Panc1 (cell line): ENCODE measurements at regions of chr7 and their contacts with region 1.

Region 1: DNA sequence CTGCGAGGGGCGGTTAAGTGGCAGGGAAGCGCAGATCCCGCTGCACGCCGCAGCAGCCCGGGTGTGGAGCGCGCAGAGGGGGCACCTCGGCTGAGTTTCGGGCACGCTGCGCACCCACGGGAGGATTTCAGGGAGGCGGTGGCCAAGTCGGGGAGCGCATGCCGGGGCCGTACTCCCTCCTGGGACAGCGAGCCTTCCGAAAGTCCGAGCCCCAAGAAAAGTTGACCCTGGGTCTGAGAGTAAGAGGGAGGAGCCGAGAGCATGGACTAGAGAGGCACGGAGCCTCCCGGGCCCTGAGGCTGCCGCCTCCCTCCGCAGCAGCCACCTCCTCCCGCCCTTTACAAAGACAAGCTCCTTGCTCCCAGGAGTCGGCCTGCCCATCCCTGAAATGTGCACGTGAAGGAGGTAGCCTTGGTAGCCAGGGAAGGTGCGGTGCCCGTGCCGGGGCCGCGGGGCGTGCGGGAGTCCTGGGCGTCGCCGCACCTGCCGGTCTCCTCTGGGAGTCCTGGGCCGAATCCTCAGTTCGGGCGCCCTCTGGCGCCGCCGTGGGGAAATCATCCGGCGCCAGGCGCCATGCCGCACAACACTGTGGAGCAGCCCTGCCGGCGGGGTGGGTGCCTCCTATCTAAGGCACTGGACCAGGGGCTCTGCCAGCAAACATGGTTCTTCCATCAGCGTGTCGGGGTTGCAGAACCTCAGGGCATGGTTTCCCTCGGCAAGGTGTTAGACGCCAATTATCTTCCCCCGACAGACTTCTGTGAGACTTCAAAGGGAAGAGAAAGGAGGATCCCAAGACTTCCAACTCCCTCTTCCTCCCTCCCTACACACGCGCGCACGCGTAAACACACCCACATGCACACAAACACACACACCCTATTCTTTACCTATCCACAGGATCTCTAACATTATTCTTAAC is 104.0 kb downstream of the TRIL start:
- DNase-seq: peak; percentile 56
- ATAC-seq: peak; percentile 98
- H3K4me3 ChIP-seq: peak overlapping the region; percentile 47 to 64
- H3K27ac ChIP-seq: no peak overlapping the region
- H3K4me1 ChIP-seq: no peaks in the 10 kb centered on the region; the same call in 1 of the 2 replicates
- H3K27me3 ChIP-seq: peaks cover 33% of the 10 kb centered on the region
- CTCF ChIP-seq: peak; percentile 98

Region 2: DNA sequence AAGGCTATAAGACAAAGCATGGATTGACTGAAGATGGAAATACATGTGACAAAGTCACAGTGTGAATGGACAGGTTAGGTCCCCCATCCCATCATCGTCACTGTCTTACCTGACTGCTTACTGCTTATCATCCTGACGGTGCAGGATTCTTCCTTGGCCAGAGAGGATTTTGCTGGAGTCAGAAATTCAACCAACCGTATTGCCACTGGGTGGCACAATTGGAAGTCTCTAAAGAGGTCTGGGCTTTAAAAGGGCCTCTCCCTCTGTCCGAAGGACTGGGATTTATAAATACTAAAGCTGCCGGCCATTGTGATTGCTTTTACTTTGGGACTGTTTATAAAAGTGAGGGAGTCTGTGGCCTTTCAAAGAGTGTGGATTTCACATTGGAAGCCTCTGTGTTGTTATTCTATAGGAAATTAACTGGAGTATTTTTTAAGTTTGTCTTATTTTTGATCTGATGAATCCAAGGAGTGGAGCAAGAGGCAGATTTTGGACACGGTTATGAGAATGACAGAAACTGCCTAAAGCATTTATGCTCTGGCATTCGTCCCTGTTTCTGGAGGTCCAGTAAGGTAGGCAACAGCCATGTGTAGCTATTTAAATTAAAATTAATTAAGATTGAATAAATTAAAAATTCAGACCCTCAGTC is 555.1 kb before region 1 on chr7:
- CTCF ChIA-PET with region 1: no interaction called
- POLR2A ChIA-PET with region 1: no interaction called
- in situ Hi-C with region 1: no loop called
- intact Hi-C with region 1: loop called (anchors 5 kb)
- DNase-seq: peak; percentile 28
- ATAC-seq: peak; percentile 94
- H3K4me3 ChIP-seq: no peak overlapping the region
- H3K27ac ChIP-seq: no peak overlapping the region
- H3K4me1 ChIP-seq: no peaks in the 10 kb centered on the region
- H3K27me3 ChIP-seq: peaks cover 2% of the 10 kb centered on the region; the same call in 1 of the 2 replicates
- CTCF ChIP-seq: peak; percentile 76

Region 3: DNA sequence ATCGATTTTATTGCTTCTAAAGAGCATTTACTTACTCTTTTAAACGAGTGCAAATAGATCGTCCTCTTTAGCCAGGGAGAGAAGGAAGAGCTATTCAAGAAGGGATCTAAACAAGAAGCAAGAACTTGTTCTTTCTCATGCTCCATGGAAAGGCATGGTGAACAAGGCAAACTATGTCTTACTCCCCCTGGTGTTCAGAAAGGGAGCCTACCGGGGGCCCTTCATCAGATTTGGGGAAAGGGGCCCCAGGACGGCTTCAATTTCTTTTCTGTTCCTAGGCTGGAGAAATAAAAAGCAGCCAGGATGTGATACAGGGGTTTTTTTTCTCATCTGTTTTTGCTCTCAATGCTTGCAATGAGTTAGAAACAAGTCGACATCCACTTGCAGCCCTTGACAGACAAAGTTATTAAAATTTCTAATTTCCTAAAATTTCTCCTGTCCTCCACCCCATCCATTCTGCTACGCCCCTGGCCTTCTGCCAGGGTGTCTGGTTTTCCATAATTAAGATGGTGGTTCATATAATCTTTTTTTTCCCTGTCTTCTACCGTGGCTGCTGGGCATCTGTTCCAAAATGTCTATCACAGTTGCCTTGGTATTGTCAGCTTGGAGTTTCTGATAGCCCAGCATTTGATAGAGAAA is 227.3 kb before region 1 on chr7:
- CTCF ChIA-PET with region 1: no interaction called
- POLR2A ChIA-PET with region 1: no interaction called
- in situ Hi-C with region 1: no loop called
- intact Hi-C with region 1: loop called (anchors 10 kb)
- DNase-seq: no peak
- ATAC-seq: peak; percentile 74; the same call in 1 of the 2 replicates
- H3K4me3 ChIP-seq: no peak overlapping the region
- H3K27ac ChIP-seq: no peak overlapping the region
- H3K4me1 ChIP-seq: no peaks in the 10 kb centered on the region
- H3K27me3 ChIP-seq: peaks cover 2% of the 10 kb centered on the region
- CTCF ChIP-seq: peak; percentile 85

Region 4: DNA sequence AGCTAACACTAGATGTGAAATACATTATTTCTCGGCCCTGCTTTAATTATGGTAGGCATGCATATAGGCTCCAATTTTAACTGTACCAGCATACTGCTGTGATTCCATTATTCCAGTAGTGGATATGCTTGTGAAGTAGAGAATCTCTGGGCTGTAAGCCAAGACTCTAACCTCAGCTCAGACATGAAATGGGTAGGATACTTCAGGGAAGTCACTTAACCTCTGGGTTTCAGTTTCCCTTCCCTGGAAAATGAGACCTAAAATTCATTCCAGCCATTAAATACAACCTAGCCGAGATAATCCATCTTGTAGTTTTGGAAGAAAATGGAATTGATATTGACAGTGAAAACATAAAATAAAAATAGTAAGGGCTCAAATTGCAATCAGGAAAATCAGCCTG is 163.6 kb after region 1 on chr7:
- CTCF ChIA-PET with region 1: no interaction called
- POLR2A ChIA-PET with region 1: no interaction called
- in situ Hi-C with region 1: no loop called
- intact Hi-C with region 1: no loop called
- DNase-seq: no peak
- ATAC-seq: no peak
- H3K4me3 ChIP-seq: no peak overlapping the region
- H3K27ac ChIP-seq: no peak overlapping the region
- H3K4me1 ChIP-seq: no peaks in the 10 kb centered on the region
- H3K27me3 ChIP-seq: no peaks in the 10 kb centered on the region
- CTCF ChIP-seq: no peak